Activated CD4-positive, alpha-beta memory T cell treated with anti-CD3 and anti-CD28 coated beads for 36 hours (primary cell): ENCODE measurements at regions of chr2 and their contacts with region 1.

Region 1: GRCh38 chr2:53970724-53971602 is at the start of gene PSME4:
- DNase-seq: peak; percentile 95
- H3K4me3 Mint-ChIP-seq: peak within 1 kb of the TSS; percentile 80
- H3K27ac Mint-ChIP-seq: peak within 1 kb of the TSS; percentile 85
- H3K4me1 Mint-ChIP-seq: peaks cover 37% of the 10 kb centered on the region
- H3K27me3 Mint-ChIP-seq: no peaks in the 10 kb centered on the region
- total RNA-seq, gene PSME4: 35.2 to 36.9 TPM

Region 2: GRCh38 chr2:53786705-53787612 is 184.0 kb before region 1 on chr2 and contains the starts of genes ASB3 and ERLEC1:
- CTCF ChIA-PET with region 1: no interaction called
- POLR2A ChIA-PET with region 1: interaction called, 3 read pairs
- intact Hi-C with region 1: loop called (anchors 2 kb)
- DNase-seq: peak; percentile 93
- H3K4me3 Mint-ChIP-seq: peak within 1 kb of the TSS; percentile 98
- H3K27ac Mint-ChIP-seq: peak within 1 kb of the TSS; percentile 94
- H3K4me1 Mint-ChIP-seq: peaks cover 46% of the 10 kb centered on the region
- H3K27me3 Mint-ChIP-seq: no peaks in the 10 kb centered on the region
- total RNA-seq, gene ASB3: 21.1 to 21.9 TPM
- total RNA-seq, gene ERLEC1: 26.7 to 27.0 TPM

Region 3: GRCh38 chr2:53859206-53860181 is 111.5 kb before region 1 on chr2 and contains the start of gene GPR75:
- CTCF ChIA-PET with region 1: no interaction called
- POLR2A ChIA-PET with region 1: no interaction called
- intact Hi-C with region 1: no loop called
- DNase-seq: no peak
- H3K4me3 Mint-ChIP-seq: no peak within 1 kb of the TSS
- H3K27ac Mint-ChIP-seq: no peak within 1 kb of the TSS
- H3K4me1 Mint-ChIP-seq: peaks cover 3% of the 10 kb centered on the region
- H3K27me3 Mint-ChIP-seq: no peaks in the 10 kb centered on the region
- total RNA-seq, gene GPR75: 0.36 to 0.48 TPM

Region 4: DNA sequence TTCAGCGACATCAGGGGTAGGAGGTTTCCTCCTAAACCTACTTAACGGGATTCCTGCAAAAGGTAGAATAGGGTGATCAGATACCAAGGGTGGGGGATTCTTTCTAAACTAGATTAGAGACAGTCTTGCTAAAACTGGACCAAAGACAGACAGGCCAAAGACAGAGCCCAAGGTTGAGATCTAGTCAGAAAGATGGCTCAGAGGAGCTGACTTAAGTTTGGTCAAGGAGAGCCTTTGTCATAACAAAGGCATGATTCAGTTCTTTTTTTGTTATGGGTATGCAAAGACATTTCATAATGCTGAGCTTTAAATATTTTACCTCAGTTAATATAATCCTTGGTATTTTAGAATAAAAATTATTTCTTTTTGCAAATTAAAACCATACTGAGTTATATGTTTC is 93.4 kb before region 1 on chr2:
- CTCF ChIA-PET with region 1: no interaction called
- POLR2A ChIA-PET with region 1: no interaction called
- intact Hi-C with region 1: no loop called
- DNase-seq: no peak
- H3K4me3 Mint-ChIP-seq: no peak overlapping the region
- H3K27ac Mint-ChIP-seq: no peak overlapping the region
- H3K4me1 Mint-ChIP-seq: peaks cover 7% of the 10 kb centered on the region
- H3K27me3 Mint-ChIP-seq: no peaks in the 10 kb centered on the region

Region 5: DNA sequence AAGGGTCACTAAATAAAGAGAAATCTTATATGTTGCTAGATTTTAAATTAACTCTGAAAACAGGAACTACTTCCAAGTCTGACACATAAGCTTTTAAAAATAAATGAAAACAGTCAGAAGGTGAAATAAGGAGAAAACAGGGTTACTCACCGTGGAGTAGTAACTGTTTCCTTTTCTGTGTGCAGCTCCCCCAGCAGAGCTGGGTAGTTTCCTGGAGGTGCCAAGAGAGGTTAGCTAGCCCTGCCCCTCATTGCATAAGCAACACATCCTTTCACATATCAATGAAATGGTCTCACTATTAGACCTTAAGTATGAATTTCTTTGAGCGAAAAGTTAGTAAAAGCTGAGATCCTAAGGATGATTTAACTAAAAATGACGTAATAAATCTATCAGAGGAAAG is 57.2 kb before region 1 on chr2:
- CTCF ChIA-PET with region 1: no interaction called
- POLR2A ChIA-PET with region 1: no interaction called
- intact Hi-C with region 1: loop called (anchors 1 kb)
- DNase-seq: peak; percentile 61
- H3K4me3 Mint-ChIP-seq: no peak overlapping the region
- H3K27ac Mint-ChIP-seq: no peak overlapping the region
- H3K4me1 Mint-ChIP-seq: peaks cover 9% of the 10 kb centered on the region
- H3K27me3 Mint-ChIP-seq: no peaks in the 10 kb centered on the region

Region 6: GRCh38 chr2:54041135-54041534 is 70.2 kb after region 1 on chr2:
- CTCF ChIA-PET with region 1: no interaction called
- POLR2A ChIA-PET with region 1: interaction called, 15 read pairs
- intact Hi-C with region 1: loop called (anchors 1 kb)
- DNase-seq: peak; percentile 79
- H3K4me3 Mint-ChIP-seq: no peak overlapping the region
- H3K27ac Mint-ChIP-seq: no peak overlapping the region
- H3K4me1 Mint-ChIP-seq: peaks cover 3% of the 10 kb centered on the region
- H3K27me3 Mint-ChIP-seq: no peaks in the 10 kb centered on the region

Region 7: GRCh38 chr2:54081574-54081973 is 110.6 kb after region 1 on chr2:
- CTCF ChIA-PET with region 1: interaction called, 3 read pairs
- POLR2A ChIA-PET with region 1: interaction called, 6 read pairs
- intact Hi-C with region 1: loop called (anchors 1 kb)
- DNase-seq: peak; percentile 86
- H3K4me3 Mint-ChIP-seq: no peak overlapping the region
- H3K27ac Mint-ChIP-seq: no peak overlapping the region
- H3K4me1 Mint-ChIP-seq: peaks cover 6% of the 10 kb centered on the region
- H3K27me3 Mint-ChIP-seq: no peaks in the 10 kb centered on the region

Region 8: DNA sequence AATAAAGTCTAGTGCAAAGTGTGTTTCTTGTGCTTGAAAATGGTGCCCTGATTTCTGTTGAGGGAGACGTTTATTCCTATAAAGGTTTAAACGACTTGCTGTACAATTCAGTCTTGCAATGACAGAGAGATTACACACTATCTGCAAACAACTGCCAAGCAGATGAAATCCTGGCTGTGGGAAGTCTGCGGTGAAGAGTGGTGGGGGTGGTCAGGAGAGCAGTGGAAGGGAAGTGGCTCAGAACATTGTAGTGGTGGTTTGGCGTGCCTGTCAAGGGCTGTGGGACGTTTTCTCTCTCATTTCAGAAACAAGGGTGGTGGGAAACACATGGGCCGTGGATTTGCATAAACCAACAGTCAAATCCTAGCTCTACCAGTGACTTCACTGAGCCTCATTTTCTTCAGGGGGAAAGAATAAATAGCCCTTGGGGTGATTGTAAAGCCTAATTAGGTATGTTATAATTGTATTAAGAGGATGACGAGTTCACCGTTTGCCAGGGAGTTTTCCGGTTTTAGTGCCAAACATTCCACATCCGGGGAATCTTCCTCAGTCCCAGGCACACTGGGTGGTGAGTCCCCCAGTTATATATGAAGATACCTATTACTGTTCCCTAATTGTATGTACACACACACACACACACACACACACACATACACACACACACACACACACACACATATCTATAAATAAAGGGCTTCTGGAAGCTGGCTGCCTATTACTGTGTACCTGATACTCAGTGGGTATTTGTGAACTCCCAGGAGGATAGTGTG is 600.1 kb after region 1 on chr2:
- CTCF ChIA-PET with region 1: no interaction called
- POLR2A ChIA-PET with region 1: no interaction called
- intact Hi-C with region 1: loop called (anchors 5 kb)
- DNase-seq: peak; percentile 93
- H3K4me3 Mint-ChIP-seq: peak overlapping the region; percentile 36
- H3K27ac Mint-ChIP-seq: peak overlapping the region; percentile 96
- H3K4me1 Mint-ChIP-seq: peaks cover 85% of the 10 kb centered on the region
- H3K27me3 Mint-ChIP-seq: no peaks in the 10 kb centered on the region